HepG2 (cell line): ENCODE measurements at regions of chr11 and their contacts with region 1.

Region 1: DNA sequence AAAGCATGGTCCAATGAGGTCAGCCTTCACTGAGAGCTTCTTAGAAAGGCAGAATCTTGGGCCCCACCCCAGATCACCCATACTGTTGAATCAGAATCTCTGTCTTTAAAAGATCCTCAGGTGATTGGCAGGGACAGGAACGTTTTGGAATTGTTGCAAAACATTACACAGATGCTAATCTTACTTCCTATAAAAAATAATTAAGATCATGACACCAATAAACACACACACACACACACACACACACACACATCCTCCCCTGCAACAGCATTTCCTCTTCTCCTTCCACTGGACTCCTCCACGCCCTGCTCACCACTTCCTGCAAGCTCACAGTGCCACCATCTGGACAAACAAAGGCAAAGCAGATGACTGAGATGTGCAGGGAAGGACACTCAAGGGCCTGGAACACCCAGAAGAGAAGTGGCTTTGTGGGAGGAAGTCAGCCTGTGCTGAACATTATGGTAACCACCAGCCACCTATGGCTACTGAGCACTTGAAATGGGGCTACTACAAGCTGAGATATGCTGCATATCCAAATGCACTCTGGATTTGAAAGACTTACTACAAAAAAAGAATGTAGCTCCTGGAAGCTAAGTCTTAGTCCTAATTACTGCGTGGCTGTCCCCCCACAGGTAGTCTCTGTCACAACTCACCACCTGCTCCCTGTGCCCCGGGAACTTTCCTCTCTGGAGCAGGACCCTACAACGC is 65.6 kb downstream of the BTG4 start:
- DNase-seq: peak; percentile 82
- ATAC-seq: peak; percentile 95
- H3K4me3 ChIP-seq: no peak overlapping the region
- H3K27ac ChIP-seq: no peak overlapping the region
- H3K4me1 ChIP-seq: peaks cover 44% of the 10 kb centered on the region
- H3K27me3 ChIP-seq: peaks cover 3 to 5% of the 10 kb centered on the region in 2 experiments; a peak in 3 of 5 replicates
- CTCF ChIP-seq: peak; percentile 98
- EP300 ChIP-seq: no peak
- POLR2A ChIP-seq: no peak
- RAD21 ChIP-seq: peak; percentile 91

Region 2: DNA sequence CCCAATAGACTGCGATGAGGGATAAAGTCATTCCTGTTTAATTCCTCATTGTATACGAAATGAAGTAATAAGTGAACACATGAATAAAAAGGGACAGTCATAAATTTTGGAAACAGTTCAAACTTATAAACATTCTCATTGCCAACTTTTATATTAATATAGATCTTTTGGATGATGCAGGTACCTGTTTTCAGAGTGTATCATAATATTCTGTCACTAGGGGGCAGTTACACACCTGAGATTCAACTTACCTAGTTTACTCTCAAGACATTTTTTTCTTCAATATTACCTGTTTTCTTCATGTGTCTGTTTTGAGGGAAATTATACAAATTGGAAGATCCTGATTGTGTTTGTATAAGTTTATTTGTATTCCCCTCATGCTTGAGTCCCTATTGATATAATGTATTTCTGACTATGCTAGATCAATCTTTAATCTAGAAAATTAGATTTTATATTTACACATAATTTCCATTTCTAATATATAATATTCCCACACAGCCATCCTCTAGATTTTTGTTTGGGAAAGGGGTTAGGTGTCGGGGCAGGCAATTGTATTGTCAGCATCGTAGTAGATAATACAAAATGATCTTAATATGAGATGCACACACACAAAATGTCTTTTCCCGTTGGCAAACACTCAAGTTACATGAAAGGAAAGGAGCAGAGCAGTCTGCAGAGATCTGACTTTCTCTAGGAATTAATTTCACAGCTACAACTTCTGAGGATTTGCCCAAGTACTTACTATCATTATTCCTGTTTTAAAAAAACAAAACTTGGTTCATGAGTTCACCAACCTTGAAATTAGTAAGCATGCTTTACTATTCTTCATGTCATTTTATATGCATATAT is 998.4 kb before region 1 on chr11:
- CTCF ChIA-PET with region 1: no interaction called
- POLR2A ChIA-PET with region 1: no interaction called
- in situ Hi-C with region 1: no loop called
- intact Hi-C with region 1: loop called (anchors 5 kb)
- DNase-seq: no peak
- ATAC-seq: no peak
- H3K4me3 ChIP-seq: no peak overlapping the region
- H3K27ac ChIP-seq: no peak overlapping the region
- H3K4me1 ChIP-seq: no peaks in the 10 kb centered on the region
- H3K27me3 ChIP-seq: no peaks in the 10 kb centered on the region
- CTCF ChIP-seq: peak; percentile 42
- EP300 ChIP-seq: no peak
- POLR2A ChIP-seq: no peak
- RAD21 ChIP-seq: no peak